CD8-positive, alpha-beta T cell (primary cell): ENCODE measurements at regions of chr17 and their contacts with region 1.

Region 1: GRCh38 chr17:56715613-56716357 is 117.9 kb downstream of the C17orf67 start:
- DNase-seq: peak; percentile 47 to 83 (median 76)
- ATAC-seq: peak; percentile 84
- H3K4me3 ChIP-seq: no peak overlapping the region
- H3K4me3 Mint-ChIP-seq: no peak overlapping the region
- H3K27ac ChIP-seq: no peak overlapping the region
- H3K27ac Mint-ChIP-seq: no peak overlapping the region
- H3K4me1 ChIP-seq: no peaks in the 10 kb centered on the region
- H3K4me1 Mint-ChIP-seq: no peaks in the 10 kb centered on the region
- H3K27me3 ChIP-seq: no peaks in the 10 kb centered on the region
- H3K27me3 Mint-ChIP-seq: peaks cover 4% of the 10 kb centered on the region
- CTCF ChIP-seq: peak; percentile 75

Region 2: DNA sequence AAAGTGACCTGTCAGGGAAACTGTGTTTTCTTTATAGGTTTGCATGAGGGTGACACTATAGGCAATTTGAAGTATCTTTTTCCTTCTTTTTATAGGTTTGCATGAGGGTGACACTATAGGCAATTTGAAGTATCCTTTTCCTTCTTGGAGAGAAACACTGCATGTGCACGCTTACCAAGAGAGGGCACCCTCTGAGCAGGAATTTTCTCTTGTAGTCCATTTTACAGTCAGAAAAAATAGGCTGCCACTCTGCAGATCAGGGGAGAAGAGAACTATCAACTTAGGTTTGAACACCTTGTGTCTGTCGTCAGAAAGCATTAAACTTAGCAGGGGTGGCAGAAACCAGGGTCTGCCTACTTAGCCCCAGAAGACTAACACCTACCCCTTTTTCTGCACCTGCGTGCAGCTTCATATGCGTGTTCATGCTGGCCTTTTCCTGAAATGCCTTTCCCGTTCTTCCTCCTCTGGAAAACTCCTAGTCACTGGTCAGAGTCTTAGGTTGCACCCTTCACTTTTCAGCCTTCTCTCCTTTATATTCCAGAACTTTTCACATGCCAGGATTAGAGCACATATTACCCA is 1188.2 kb before region 1 on chr17:
- CTCF ChIA-PET with region 1: interaction called, 13 read pairs
- POLR2A ChIA-PET with region 1: no interaction called
- intact Hi-C with region 1: loop called in 1 of 2 experiments (anchors 1 kb)
- DNase-seq: no peak
- ATAC-seq: no peak
- H3K4me3 ChIP-seq: no peak overlapping the region
- H3K4me3 Mint-ChIP-seq: no peak overlapping the region
- H3K27ac ChIP-seq: no peak overlapping the region
- H3K27ac Mint-ChIP-seq: no peak overlapping the region
- H3K4me1 ChIP-seq: no peaks in the 10 kb centered on the region
- H3K4me1 Mint-ChIP-seq: no peaks in the 10 kb centered on the region
- H3K27me3 ChIP-seq: no peaks in the 10 kb centered on the region
- H3K27me3 Mint-ChIP-seq: peaks cover 6% of the 10 kb centered on the region
- CTCF ChIP-seq: no peak

Region 3: DNA sequence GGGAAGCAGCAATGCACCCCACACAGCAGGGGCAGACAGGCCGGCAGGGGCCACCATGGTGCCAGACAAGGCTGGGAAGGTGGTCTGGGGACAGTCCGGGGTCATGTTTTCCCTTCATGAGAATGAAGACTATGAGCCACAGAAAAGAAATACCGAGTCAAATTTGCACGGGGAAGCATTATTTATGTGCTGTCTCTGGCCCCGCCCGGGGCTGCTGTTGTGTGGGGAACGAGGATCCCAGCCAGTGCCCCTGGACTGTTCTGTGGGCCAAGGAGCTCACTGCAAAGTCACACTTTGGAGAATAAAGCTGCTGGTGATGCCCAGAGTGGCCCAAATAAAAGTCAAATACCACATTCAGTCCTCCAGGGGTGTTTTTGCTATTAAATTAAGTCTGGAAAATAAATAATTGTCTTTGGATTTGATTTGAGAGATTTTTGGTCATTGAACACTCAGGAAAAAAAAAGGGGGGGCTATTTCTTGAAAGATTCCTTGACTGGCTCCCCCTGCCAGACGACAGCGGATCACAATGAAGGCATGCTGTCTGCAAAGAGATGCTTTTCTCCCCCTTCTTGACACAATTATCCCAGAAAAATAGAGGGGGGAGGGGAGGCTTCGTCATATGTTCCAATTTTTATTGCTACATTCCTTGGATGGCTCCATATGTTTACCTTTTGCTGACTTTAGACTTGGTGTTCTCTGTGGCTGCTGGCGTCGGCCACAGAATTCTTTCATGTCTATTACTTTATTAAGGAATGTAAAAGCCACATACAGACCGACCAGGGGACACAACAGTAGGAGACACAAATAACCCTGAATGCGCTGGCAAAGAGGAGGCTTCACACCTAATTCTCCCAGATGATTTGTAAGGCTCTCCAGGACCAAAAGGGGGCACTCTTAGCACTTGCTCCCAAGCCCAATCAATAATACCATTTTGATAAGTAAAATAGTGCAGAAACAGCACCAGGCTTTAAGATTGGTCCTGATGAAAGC is 589.7 kb before region 1 on chr17:
- CTCF ChIA-PET with region 1: interaction called, 5 read pairs
- POLR2A ChIA-PET with region 1: no interaction called
- intact Hi-C with region 1: loop called (anchors 10 kb)
- DNase-seq: peak in 2 of 9 experiments; percentile 3 to 25
- ATAC-seq: no peak
- H3K4me3 ChIP-seq: no peak overlapping the region
- H3K4me3 Mint-ChIP-seq: no peak overlapping the region
- H3K27ac ChIP-seq: no peak overlapping the region
- H3K27ac Mint-ChIP-seq: no peak overlapping the region
- H3K4me1 ChIP-seq: no peaks in the 10 kb centered on the region
- H3K4me1 Mint-ChIP-seq: no peaks in the 10 kb centered on the region
- H3K27me3 ChIP-seq: no peaks in the 10 kb centered on the region
- H3K27me3 Mint-ChIP-seq: no peaks in the 10 kb centered on the region
- CTCF ChIP-seq: no peak

Region 4: GRCh38 chr17:56505154-56505756 is 210.5 kb before region 1 on chr17:
- CTCF ChIA-PET with region 1: interaction called, 36 read pairs
- POLR2A ChIA-PET with region 1: no interaction called
- intact Hi-C with region 1: loop called (anchors 1 to 2 kb)
- DNase-seq: no peak
- ATAC-seq: no peak
- H3K4me3 ChIP-seq: no peak overlapping the region
- H3K4me3 Mint-ChIP-seq: no peak overlapping the region
- H3K27ac ChIP-seq: no peak overlapping the region
- H3K27ac Mint-ChIP-seq: no peak overlapping the region
- H3K4me1 ChIP-seq: no peaks in the 10 kb centered on the region
- H3K4me1 Mint-ChIP-seq: no peaks in the 10 kb centered on the region
- H3K27me3 ChIP-seq: no peaks in the 10 kb centered on the region
- H3K27me3 Mint-ChIP-seq: peaks cover 5% of the 10 kb centered on the region
- CTCF ChIP-seq: no peak

Region 5: DNA sequence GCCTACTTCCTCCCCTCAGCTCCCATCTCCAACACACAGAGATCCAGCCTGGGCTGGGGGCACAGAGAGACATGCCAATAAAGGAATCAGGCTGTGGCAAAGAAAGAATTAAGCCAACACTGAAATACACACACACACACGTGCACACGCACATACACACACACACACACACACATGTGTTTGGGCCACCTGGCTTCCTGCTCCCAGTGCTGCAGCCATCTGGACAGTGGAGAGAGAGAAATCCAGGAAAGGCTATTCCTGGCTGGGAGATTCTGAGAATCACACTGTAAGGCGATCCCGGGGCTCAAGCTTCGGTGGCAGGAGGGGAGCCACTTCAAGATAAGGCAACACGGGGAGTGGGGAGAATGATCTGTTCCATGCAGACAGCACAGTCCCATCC is 49.9 kb before region 1 on chr17:
- CTCF ChIA-PET with region 1: no interaction called
- POLR2A ChIA-PET with region 1: no interaction called
- intact Hi-C with region 1: no loop called
- DNase-seq: no peak
- ATAC-seq: no peak
- H3K4me3 ChIP-seq: no peak overlapping the region
- H3K4me3 Mint-ChIP-seq: no peak overlapping the region
- H3K27ac ChIP-seq: no peak overlapping the region
- H3K27ac Mint-ChIP-seq: no peak overlapping the region
- H3K4me1 ChIP-seq: no peaks in the 10 kb centered on the region
- H3K4me1 Mint-ChIP-seq: no peaks in the 10 kb centered on the region
- H3K27me3 ChIP-seq: no peaks in the 10 kb centered on the region
- H3K27me3 Mint-ChIP-seq: peaks cover 14% of the 10 kb centered on the region
- CTCF ChIP-seq: no peak

Region 6: GRCh38 chr17:56679115-56679766 is 36.5 kb before region 1 on chr17:
- CTCF ChIA-PET with region 1: interaction called, 7 read pairs
- POLR2A ChIA-PET with region 1: interaction called, 3 read pairs
- intact Hi-C with region 1: loop called in 1 of 2 experiments (anchors 2 kb)
- DNase-seq: peak in 2 of 9 experiments; percentile 33 to 52
- ATAC-seq: peak; percentile 38
- H3K4me3 ChIP-seq: peak overlapping the region in 1 of 2 experiments; percentile 55
- H3K4me3 Mint-ChIP-seq: peak overlapping the region; percentile 79
- H3K27ac ChIP-seq: no peak overlapping the region
- H3K27ac Mint-ChIP-seq: no peak overlapping the region
- H3K4me1 ChIP-seq: peaks cover 37% of the 10 kb centered on the region
- H3K4me1 Mint-ChIP-seq: peaks cover 32% of the 10 kb centered on the region
- H3K27me3 ChIP-seq: peaks cover 0 to 13% of the 10 kb centered on the region in 2 experiments
- H3K27me3 Mint-ChIP-seq: peaks cover 58% of the 10 kb centered on the region
- CTCF ChIP-seq: peak; percentile 64

Region 7: GRCh38 chr17:56762988-56763387 is 47.2 kb after region 1 on chr17:
- CTCF ChIA-PET with region 1: interaction called, 13 read pairs
- POLR2A ChIA-PET with region 1: no interaction called
- intact Hi-C with region 1: no loop called
- DNase-seq: no peak
- ATAC-seq: peak; percentile 36
- H3K4me3 ChIP-seq: no peak overlapping the region
- H3K4me3 Mint-ChIP-seq: no peak overlapping the region
- H3K27ac ChIP-seq: no peak overlapping the region
- H3K27ac Mint-ChIP-seq: no peak overlapping the region
- H3K4me1 ChIP-seq: peaks cover 13% of the 10 kb centered on the region
- H3K4me1 Mint-ChIP-seq: peaks cover 6% of the 10 kb centered on the region
- H3K27me3 ChIP-seq: no peaks in the 10 kb centered on the region
- H3K27me3 Mint-ChIP-seq: peaks cover 4% of the 10 kb centered on the region
- CTCF ChIP-seq: no peak